ENCODE measurements at regions of chr13 and their contacts with region 1.

Region 1: DNA sequence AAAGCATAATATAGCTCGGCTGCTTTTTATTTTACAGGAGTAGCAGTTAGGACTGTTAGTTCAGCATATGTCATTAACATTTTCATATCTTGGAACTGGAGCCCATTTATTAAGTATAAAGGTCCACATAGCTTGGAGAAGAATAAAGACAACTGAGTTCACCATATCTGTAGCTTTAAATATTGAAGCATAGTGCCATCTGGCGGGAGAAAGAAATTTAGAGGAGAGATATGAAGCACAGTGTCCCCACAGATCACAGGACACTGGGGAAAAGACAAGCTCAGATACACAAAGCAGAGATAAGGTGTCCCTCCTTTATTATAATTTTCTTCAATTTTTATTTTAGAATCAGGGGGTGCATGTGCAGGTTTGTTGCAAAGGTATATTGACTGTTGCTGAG is 104.7 kb upstream of the FREM2 start:
- DNase-seq: no peak
- ATAC-seq: peak; percentile 67

Region 2: GRCh38 chr13:37640499-37640898 is 941.6 kb before region 1 on chr13:
- intact Hi-C with region 1: loop called (anchors 5 kb)
- DNase-seq: no peak
- ATAC-seq: no peak

Measured in Right ventricle myocardium inferior (tissue), 1 donor.